Caco-2 (cell line): ENCODE measurements at regions of chr17 and their contacts with region 1.

Region 1: GRCh38 chr17:74659898-74660297 is 36.4 kb upstream of the CD300E start:
- DNase-seq: no peak
- H3K4me3 ChIP-seq: no peak overlapping the region
- H3K4me3 Mint-ChIP-seq: no peak overlapping the region
- H3K27ac Mint-ChIP-seq: no peak overlapping the region
- H3K4me1 ChIP-seq: peaks cover 7% of the 10 kb centered on the region; the same call in 1 of the 2 replicates
- H3K4me1 Mint-ChIP-seq: no peaks in the 10 kb centered on the region
- H3K27me3 ChIP-seq: no peaks in the 10 kb centered on the region; the same call in 1 of the 2 replicates
- H3K27me3 Mint-ChIP-seq: no peaks in the 10 kb centered on the region
- CTCF ChIP-seq: no peak

Region 2: GRCh38 chr17:74671031-74671771 is 11.3 kb after region 1 on chr17:
- CTCF ChIA-PET with region 1: interaction called, 17 read pairs
- POLR2A ChIA-PET with region 1: no interaction called
- intact Hi-C with region 1: no loop called
- DNase-seq: peak; percentile 83 to 89
- H3K4me3 ChIP-seq: no peak overlapping the region
- H3K4me3 Mint-ChIP-seq: no peak overlapping the region
- H3K27ac Mint-ChIP-seq: no peak overlapping the region
- H3K4me1 ChIP-seq: peaks cover 13% of the 10 kb centered on the region; the same call in 1 of the 2 replicates
- H3K4me1 Mint-ChIP-seq: peaks cover 16% of the 10 kb centered on the region
- H3K27me3 ChIP-seq: no peaks in the 10 kb centered on the region
- H3K27me3 Mint-ChIP-seq: peaks cover 10% of the 10 kb centered on the region
- CTCF ChIP-seq: no peak

Region 3: GRCh38 chr17:74712756-74713155 is 52.9 kb after region 1 on chr17 and contains the start of gene CD300LF:
- CTCF ChIA-PET with region 1: interaction called, 15 read pairs
- POLR2A ChIA-PET with region 1: no interaction called
- intact Hi-C with region 1: loop called (anchors 1 kb)
- DNase-seq: no peak
- H3K4me3 ChIP-seq: no peak within 1 kb of the TSS
- H3K4me3 Mint-ChIP-seq: no peak within 1 kb of the TSS
- H3K27ac Mint-ChIP-seq: peak within 1 kb of the TSS; percentile 56
- H3K4me1 ChIP-seq: peaks cover 29% of the 10 kb centered on the region
- H3K4me1 Mint-ChIP-seq: peaks cover 17% of the 10 kb centered on the region
- H3K27me3 ChIP-seq: no peaks in the 10 kb centered on the region
- H3K27me3 Mint-ChIP-seq: no peaks in the 10 kb centered on the region
- CTCF ChIP-seq: no peak
- total RNA-seq, gene CD300LF: 2.2 and 2.4 TPM in 2 replicates

Region 4: DNA sequence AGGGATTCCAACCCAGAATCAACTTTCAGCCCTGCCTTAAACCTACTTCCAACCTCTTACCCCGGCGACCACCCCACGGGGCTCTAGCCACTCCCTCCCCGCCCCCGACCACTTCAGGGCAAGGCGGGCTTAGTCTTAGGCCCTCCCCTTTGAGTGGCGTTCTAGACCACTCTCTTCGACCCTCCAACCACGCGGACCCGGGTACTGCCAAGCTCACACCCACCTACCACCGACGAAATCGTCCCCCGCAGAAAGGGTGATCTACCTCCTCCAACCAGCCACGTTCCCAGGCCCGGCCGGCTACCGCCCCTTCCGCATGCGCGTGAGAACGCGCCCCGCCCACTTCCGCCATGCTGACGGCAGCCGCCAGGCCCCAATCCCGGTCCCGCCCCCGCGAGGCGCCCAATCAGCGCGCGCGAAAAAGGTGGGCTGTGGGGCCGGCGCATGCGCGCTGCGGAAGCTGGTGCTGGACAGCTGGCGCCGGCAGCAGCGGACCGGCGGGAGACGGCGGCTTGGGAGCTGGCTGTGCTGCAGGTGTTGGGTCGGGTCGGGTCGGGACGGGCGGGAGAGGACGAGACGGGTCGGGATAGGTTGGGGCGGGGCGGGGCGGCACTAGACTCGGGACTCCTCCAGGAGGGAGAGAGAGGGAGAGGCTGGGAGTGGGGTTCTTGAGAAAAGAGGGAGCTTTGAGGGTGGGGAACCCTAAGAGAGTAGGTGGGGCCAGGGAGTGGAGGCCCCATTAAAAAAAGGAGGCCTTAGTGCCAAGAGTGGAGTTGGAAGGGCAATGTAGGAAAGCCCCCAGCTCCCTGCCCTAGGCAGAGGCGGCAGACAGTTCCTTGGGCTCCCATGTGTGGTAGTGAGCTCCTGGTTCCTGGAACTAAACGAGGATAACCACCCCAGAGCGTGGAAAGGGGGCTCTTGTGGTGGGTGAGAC is 116.4 kb after region 1 on chr17 and contains the start of gene NAT9:
- CTCF ChIA-PET with region 1: interaction called, 24 read pairs
- POLR2A ChIA-PET with region 1: no interaction called
- intact Hi-C with region 1: loop called (anchors 2 kb)
- DNase-seq: peak; percentile 97 to 100
- H3K4me3 ChIP-seq: peak within 1 kb of the TSS; percentile 80
- H3K4me3 Mint-ChIP-seq: peak within 1 kb of the TSS; percentile 97
- H3K27ac Mint-ChIP-seq: peak within 1 kb of the TSS; percentile 95
- H3K4me1 ChIP-seq: peaks cover 27% of the 10 kb centered on the region
- H3K4me1 Mint-ChIP-seq: peaks cover 22% of the 10 kb centered on the region
- H3K27me3 ChIP-seq: no peaks in the 10 kb centered on the region
- H3K27me3 Mint-ChIP-seq: no peaks in the 10 kb centered on the region
- CTCF ChIP-seq: no peak
- total RNA-seq, gene NAT9: 84.5 and 89.5 TPM in 2 replicates